ENCODE measurements at regions of chr15 and their contacts with region 1.

Region 1: DNA sequence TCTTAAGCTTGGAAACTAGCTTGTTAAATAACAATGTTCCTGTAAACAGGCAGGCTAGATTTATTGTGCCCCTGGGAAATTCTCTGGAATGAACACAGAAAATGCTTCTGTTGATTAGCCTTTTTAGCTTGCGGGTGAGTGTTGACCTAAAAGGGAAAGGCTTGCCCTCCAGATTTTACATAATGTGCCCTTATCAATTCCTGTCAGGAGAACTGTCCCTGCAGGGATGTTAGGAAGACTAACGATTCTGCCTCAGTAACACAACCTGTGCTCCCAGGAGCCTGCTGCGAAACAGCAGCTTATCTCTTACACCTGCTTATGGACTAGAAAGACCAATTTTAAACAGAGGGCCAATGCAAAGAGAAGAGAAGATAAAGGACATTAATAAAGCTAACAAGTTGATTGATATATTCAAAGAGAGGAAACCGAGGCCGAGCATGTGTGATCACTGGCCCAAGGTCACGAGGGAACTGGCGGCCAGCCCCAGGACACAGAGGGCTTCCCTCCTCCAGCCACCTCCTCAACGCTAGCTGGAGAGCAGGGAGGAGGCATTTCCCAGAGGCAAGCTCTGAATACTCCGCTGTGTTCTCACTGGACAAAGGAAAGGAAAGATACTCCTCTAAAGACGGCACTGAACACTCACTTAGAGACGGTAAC is 48.4 kb upstream of the TJP1 start:
- DNase-seq: peak in 3 of 10 donors; percentile 41 to 54 (median 46)
- H3K4me3 ChIP-seq: peak overlapping the region in 38 of 59 donors; percentile 0 to 43 (median 20)
- H3K27ac ChIP-seq: peak overlapping the region; percentile 51 to 94 (median 85)
- H3K27me3 ChIP-seq: no peaks in the 10 kb centered on the region
- CTCF ChIP-seq: no peak

Region 2: GRCh38 chr15:29821416-29822131 is 49.0 kb before region 1 on chr15:
- intact Hi-C with region 1: loop called (anchors 5 to 10 kb)
- DNase-seq: peak in 8 of 10 donors; percentile 23 to 80 (median 57)
- H3K4me3 ChIP-seq: peak overlapping the region; percentile 53 to 93 (median 80)
- H3K27ac ChIP-seq: peak overlapping the region; percentile 61 to 97 (median 91)
- H3K27me3 ChIP-seq: no peaks in the 10 kb centered on the region
- CTCF ChIP-seq: peak in 13 of 56 donors; percentile 6 to 21 (median 12)

Region 3: DNA sequence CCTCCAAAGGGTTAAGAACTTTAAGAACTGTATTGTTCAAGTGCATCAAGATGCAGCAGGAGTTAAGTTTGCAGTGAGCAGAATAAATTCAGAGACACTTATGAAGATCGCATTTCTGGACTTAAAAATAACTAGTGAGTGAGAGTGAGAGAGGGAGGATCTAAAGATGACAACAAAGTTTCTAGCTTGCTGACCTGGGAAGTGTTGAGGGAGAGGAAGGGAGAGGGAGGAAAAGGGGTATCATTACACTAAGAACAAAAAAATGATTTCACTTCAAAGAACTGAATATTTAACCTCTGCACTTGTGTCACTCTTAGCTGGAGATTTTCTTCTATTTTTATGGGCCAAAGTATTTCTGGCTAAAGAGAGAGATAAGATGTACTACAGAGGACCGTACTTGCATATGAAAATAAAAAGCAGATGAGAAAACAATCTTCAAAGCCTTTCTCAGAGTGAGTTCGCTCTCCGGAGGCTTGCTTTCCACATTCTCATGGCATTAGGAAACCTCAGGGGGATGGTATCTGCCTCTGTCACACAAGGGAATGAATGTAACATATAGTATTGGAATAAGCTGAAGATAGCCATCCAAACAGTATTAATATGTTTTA is 43.0 kb after region 1 on chr15:
- intact Hi-C with region 1: loop called in 1 of 2 experiments (anchors 5 kb)
- DNase-seq: no peak
- H3K4me3 ChIP-seq: peak overlapping the region in 9 of 59 donors; percentile 6 to 20 (median 13)
- H3K27ac ChIP-seq: peak overlapping the region in 56 of 59 donors; percentile 6 to 88 (median 68)
- H3K27me3 ChIP-seq: no peaks in the 10 kb centered on the region
- CTCF ChIP-seq: no peak

Region 4: DNA sequence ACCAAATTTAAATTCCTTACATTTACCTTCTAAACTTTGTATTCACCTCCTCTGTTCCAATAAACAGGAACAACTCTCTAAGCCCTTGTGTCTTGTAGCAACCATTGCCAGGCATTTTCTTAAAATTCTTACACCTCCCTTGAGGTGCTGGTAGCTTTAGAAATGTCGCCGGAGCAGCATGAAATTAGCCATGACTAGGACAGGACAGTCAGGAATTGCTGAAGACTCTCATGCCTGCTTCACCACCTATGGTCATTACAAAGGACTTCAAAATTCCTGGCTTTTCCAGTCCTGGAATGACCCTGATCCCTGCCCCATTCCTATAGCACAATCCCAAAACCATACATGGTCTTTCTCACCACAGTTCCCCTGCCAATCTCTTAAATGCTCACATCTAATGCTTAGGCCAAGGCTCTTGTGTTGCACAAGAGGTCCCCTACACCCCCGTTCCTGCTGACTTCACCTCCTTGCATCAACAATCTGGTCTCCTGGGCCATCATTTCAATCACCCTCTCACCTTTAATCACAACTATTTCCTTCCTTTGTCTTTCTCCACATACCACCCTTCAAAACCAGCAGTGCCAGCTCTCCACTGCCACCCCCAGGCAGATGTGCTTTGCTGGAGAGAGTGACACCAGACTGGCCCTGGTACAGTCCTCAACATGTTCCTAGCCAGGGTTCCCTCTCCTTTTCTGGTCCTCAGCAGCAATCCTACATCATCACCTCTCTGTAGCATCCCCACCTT is 64.8 kb after region 1 on chr15:
- intact Hi-C with region 1: loop called in 1 of 2 experiments (anchors 10 kb)
- DNase-seq: no peak
- H3K4me3 ChIP-seq: no peak overlapping the region
- H3K27ac ChIP-seq: peak overlapping the region in 44 of 59 donors; percentile 2 to 92 (median 56)
- H3K27me3 ChIP-seq: no peaks in the 10 kb centered on the region
- CTCF ChIP-seq: peak in 41 of 56 donors; percentile 8 to 64 (median 35)

Measured in dorsolateral prefrontal cortex (tissue), 120 donors.